K562 (cell line): ENCODE measurements at regions of chr1 and their contacts with region 1.

Region 1: DNA sequence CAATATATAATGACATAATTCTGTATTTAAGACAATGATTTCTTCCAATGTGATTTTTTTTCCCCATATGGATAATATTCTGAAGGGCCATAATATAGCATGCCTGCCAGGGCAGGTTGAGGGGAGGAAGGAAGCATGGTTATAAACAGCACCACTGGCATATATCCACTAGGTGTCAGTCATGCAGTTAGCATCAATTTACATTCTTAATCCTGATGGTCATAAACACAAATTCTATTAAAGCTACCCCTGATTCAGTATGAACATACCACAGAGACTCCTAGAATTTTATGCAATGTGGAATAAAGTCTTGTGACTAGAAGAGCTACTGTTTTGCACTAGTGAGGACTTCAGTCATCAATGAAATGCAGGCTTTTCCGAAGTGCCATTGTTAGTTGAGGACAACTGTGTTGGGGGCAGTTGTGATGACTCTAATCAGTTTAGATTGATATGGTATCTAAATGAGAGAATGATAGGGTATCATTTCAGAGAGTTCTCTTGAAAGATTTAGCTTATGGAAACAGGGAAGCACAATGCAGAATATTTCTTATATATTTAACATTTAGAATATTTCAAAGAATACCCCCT is 342.7 kb upstream of the NR5A2 start:
- DNase-seq: peak; percentile 43 to 53 (median 44)
- ATAC-seq: peak; percentile 92
- H3K4me3 ChIP-seq: no peak overlapping the region
- H3K27ac ChIP-seq: no peak overlapping the region
- H3K4me1 ChIP-seq: no peaks in the 10 kb centered on the region
- H3K27me3 ChIP-seq: no peaks in the 10 kb centered on the region
- CTCF ChIP-seq: peak; percentile 55 to 79 (median 71)
- EP300 ChIP-seq: no peak
- POLR2A ChIP-seq: no peak
- RAD21 ChIP-seq: peak; percentile 90 to 91

Region 2: DNA sequence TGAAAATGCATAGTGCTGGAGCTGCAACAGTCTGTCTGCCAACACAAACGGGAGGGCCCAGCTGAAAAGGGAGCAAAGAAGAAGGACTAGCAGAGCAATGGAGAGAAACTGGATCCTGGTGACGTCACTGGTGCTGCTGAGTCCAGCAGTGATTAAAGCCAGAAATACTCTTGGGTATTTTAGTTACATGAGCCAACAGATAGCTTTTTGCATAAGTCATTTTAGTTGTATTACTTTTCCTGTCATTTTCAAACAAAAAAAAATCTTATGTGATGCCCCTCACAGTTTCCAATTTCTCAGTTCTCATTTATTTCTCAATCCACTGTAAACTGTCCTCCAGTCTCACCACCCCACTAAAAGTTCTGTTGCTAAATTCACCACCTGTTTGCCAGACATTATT is 1566.6 kb before region 1 on chr1:
- CTCF ChIA-PET with region 1: no interaction called
- POLR2A ChIA-PET with region 1: no interaction called
- in situ Hi-C with region 1: no loop called
- intact Hi-C with region 1: no loop called
- DNase-seq: peak in 1 of 4 experiments; percentile 13
- ATAC-seq: no peak
- H3K4me3 ChIP-seq: no peak overlapping the region
- H3K27ac ChIP-seq: no peak overlapping the region
- H3K4me1 ChIP-seq: peaks cover 2 to 22% of the 10 kb centered on the region in 2 experiments; a peak in 3 of 5 replicates
- H3K27me3 ChIP-seq: no peaks in the 10 kb centered on the region
- CTCF ChIP-seq: no peak
- EP300 ChIP-seq: no peak
- POLR2A ChIP-seq: no peak
- RAD21 ChIP-seq: no peak

Region 3: GRCh38 chr1:199612976-199613774 is 71.6 kb before region 1 on chr1:
- CTCF ChIA-PET with region 1: no interaction called
- POLR2A ChIA-PET with region 1: no interaction called
- in situ Hi-C with region 1: no loop called
- intact Hi-C with region 1: no loop called
- DNase-seq: no peak
- ATAC-seq: no peak
- H3K4me3 ChIP-seq: no peak overlapping the region
- H3K27ac ChIP-seq: no peak overlapping the region
- H3K4me1 ChIP-seq: no peaks in the 10 kb centered on the region
- H3K27me3 ChIP-seq: no peaks in the 10 kb centered on the region
- CTCF ChIP-seq: no peak
- EP300 ChIP-seq: no peak
- POLR2A ChIP-seq: no peak
- RAD21 ChIP-seq: no peak

Region 4: GRCh38 chr1:200279810-200280411 is 595.1 kb after region 1 on chr1:
- CTCF ChIA-PET with region 1: no interaction called
- POLR2A ChIA-PET with region 1: no interaction called
- in situ Hi-C with region 1: no loop called
- intact Hi-C with region 1: loop called (anchors 2 kb)
- DNase-seq: peak; percentile 56 to 69 (median 64)
- ATAC-seq: peak; percentile 88
- H3K4me3 ChIP-seq: no peak overlapping the region
- H3K27ac ChIP-seq: no peak overlapping the region
- H3K4me1 ChIP-seq: peaks cover 0 to 11% of the 10 kb centered on the region in 2 experiments; a peak in 2 of 5 replicates
- H3K27me3 ChIP-seq: peaks cover 0 to 9% of the 10 kb centered on the region in 2 experiments; a peak in 1 of 5 replicates
- CTCF ChIP-seq: peak; percentile 76 to 90 (median 77)
- EP300 ChIP-seq: no peak
- POLR2A ChIP-seq: no peak
- RAD21 ChIP-seq: peak; percentile 46 to 76

Region 5: DNA sequence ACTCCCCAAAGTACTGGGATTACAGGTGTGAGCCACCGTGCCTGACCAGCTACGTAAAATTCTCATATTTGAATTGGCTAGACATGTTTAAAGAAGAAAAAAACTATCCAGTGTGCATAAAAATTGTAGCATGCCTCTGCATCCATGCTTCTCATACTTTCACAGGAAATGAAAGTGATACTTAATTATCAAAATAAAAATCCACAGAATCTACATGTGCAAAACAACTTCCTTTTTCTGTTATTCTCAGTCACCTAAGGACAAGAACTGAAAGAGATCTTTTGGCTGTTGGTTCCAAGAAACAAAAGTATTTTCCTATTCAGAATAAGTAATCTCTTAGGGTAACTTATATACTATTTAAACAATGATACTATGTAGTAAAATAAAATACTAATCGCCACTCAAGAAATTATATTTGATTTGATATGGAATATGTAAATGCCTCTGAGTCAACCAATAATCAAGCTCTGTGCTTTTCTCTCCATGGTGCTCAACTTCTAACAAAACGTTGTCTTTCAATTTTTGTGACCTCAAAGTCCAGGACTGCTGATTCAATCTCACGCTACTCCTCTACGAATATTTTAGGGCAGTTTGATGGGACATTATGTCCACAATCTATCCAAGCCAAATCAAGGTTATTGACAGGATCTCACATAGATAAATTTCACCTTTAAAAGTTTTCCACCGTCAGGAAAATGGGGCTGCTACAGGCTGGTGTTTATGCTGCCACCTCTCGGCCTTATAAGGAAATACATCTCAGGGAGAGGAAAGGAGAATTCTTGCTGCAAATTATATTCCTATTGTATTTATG is 622.4 kb after region 1 on chr1:
- CTCF ChIA-PET with region 1: no interaction called
- POLR2A ChIA-PET with region 1: no interaction called
- in situ Hi-C with region 1: no loop called
- intact Hi-C with region 1: loop called (anchors 1 kb)
- DNase-seq: peak; percentile 61 to 73 (median 71)
- ATAC-seq: peak; percentile 73
- H3K4me3 ChIP-seq: no peak overlapping the region
- H3K27ac ChIP-seq: no peak overlapping the region
- H3K4me1 ChIP-seq: peaks cover 0 to 3% of the 10 kb centered on the region in 2 experiments; a peak in 2 of 5 replicates
- H3K27me3 ChIP-seq: peaks cover 11 to 25% of the 10 kb centered on the region in 2 experiments
- CTCF ChIP-seq: peak; percentile 72 to 85 (median 83)
- EP300 ChIP-seq: no peak
- POLR2A ChIP-seq: no peak
- RAD21 ChIP-seq: peak; percentile 79 to 82